AG04450 (cell line): ENCODE measurements at regions of chr6 and their contacts with region 1.

Region 1: DNA sequence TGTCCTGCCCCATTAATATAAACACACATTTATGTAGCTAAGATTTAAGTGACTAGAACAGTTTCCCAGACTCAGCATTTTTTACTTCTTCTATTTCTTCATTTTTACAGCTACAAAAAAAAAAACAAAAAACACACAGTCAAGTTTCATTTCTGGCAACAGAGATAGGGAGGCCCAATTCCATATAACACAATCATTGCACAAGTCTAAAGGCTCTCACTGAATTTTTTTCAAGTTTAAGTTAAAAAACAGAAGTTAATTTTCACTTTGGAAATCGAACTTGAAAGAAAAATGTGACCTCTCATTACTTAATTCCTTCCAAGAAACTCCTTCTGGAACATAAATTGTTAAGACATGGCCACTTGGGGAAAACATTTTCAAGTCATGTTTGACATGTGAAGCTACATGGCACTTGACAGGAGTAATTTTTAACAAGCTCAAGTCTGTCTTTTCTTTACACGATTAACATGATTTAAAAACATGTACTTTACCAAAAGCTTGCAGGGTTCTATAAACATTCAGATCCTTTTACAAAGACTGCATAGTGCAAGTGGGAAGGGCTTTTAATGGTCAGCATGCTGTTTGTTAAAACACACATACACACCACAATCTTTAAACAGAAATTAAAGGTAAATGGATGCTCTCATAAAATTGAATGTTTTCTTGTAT is 100.1 kb upstream of the CCDC28A start:
- DNase-seq: no peak
- H3K4me3 ChIP-seq: no peak overlapping the region
- H3K27ac ChIP-seq: no peak overlapping the region
- H3K27me3 ChIP-seq: no peaks in the 10 kb centered on the region
- CTCF ChIP-seq: no peak

Region 2: DNA sequence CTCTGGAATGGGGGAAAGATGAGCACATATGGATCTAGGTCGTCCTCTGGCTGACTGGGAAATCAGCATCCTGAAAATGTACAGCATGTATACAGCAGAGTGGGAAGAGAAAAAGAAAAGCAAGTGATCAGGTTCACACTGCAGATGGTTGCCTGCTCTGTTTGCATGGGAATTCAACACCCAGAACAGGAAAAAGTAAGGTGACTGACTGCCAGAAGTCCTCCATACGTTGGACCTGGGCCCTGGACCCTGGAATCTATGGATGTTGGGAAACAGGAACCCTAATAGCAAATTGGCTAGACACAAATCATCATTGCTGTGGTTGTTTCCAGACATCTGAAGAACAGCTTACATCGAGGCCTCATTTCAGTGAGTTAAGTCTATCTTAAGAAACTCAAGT is 836.7 kb before region 1 on chr6:
- CTCF ChIA-PET with region 1: no interaction called
- POLR2A ChIA-PET with region 1: interaction called, 13 read pairs
- DNase-seq: no peak
- H3K4me3 ChIP-seq: no peak overlapping the region
- H3K27ac ChIP-seq: no peak overlapping the region
- H3K27me3 ChIP-seq: no peaks in the 10 kb centered on the region
- CTCF ChIP-seq: no peak

Region 3: GRCh38 chr6:138692058-138692977 is 18.8 kb after region 1 on chr6:
- CTCF ChIA-PET with region 1: interaction called, 15 read pairs
- POLR2A ChIA-PET with region 1: interaction called, 5 read pairs
- DNase-seq: no peak
- H3K4me3 ChIP-seq: peak overlapping the region; percentile 78
- H3K27ac ChIP-seq: peak overlapping the region; percentile 70
- H3K27me3 ChIP-seq: no peaks in the 10 kb centered on the region
- CTCF ChIP-seq: peak; percentile 64

Region 4: DNA sequence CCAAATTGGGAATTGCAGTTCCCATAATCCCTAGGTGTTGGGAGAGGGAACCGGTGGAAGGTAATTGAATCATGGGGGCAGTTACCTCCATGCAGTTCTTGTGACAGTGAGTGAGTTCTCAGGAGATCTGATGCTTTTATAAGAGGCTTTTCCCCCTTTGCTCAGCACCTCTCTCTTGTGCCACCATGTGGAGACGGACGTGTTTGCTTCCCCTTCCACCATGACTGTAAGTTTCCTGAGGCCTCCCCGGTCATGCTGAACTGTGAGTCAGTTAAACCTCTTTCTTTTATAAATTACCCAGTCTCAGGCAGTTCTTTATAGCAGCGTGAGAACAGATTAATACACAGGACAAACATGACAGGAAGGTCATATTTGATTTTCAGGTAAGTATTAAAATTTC is 436.1 kb after region 1 on chr6:
- CTCF ChIA-PET with region 1: no interaction called
- POLR2A ChIA-PET with region 1: no interaction called
- DNase-seq: no peak
- H3K4me3 ChIP-seq: no peak overlapping the region
- H3K27ac ChIP-seq: no peak overlapping the region
- H3K27me3 ChIP-seq: peaks cover 8% of the 10 kb centered on the region
- CTCF ChIP-seq: peak; percentile 38